ENCODE measurements at regions of chr5 and their contacts with region 1.

Region 1: GRCh38 chr5:170183816-170184687 is 48.7 kb upstream of the C5orf58 start:
- DNase-seq: peak; percentile 94
- ATAC-seq: peak; percentile 98
- H3K4me3 Mint-ChIP-seq: no peak overlapping the region
- H3K27ac Mint-ChIP-seq: no peak overlapping the region
- H3K4me1 Mint-ChIP-seq: peaks cover under 1% of the 10 kb centered on the region; the same call in 1 of the 2 replicates
- H3K27me3 Mint-ChIP-seq: no peaks in the 10 kb centered on the region
- CTCF ChIP-seq: peak; percentile 67

Region 2: GRCh38 chr5:170100066-170100943 is 83.7 kb before region 1 on chr5:
- CTCF ChIA-PET with region 1: interaction called, 38 read pairs
- POLR2A ChIA-PET with region 1: no interaction called
- DNase-seq: peak; percentile 90
- ATAC-seq: peak; percentile 89
- H3K4me3 Mint-ChIP-seq: no peak overlapping the region
- H3K27ac Mint-ChIP-seq: no peak overlapping the region
- H3K4me1 Mint-ChIP-seq: peaks cover 8% of the 10 kb centered on the region
- H3K27me3 Mint-ChIP-seq: peaks cover 5% of the 10 kb centered on the region; the same call in 1 of the 2 replicates
- CTCF ChIP-seq: peak; percentile 68

Region 3: GRCh38 chr5:170112876-170113521 is 71.1 kb before region 1 on chr5:
- CTCF ChIA-PET with region 1: interaction called, 12 read pairs
- POLR2A ChIA-PET with region 1: interaction called, 3 read pairs
- DNase-seq: peak; percentile 16
- ATAC-seq: peak; percentile 88
- H3K4me3 Mint-ChIP-seq: no peak overlapping the region
- H3K27ac Mint-ChIP-seq: no peak overlapping the region
- H3K4me1 Mint-ChIP-seq: peaks cover 39% of the 10 kb centered on the region
- H3K27me3 Mint-ChIP-seq: peaks cover 42% of the 10 kb centered on the region
- CTCF ChIP-seq: no peak

Region 4: DNA sequence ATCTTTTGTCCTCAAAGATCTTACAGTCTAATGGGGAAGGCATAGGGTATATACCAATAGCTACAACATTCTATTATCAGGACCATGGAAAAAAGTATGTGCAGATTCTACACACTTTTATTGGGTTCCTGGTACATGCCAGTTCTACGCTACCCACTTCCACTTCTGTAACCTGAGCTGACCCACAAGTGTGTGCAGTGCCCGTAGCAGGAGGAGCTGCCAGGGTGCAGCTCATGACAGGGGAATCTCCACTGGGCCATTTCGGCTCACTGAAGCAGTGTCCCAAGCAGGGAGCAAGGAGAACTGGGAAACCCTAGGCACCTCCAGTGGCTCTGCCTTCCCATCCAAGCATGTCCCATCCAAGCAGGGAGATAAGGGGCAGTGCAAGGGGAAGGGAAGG is 18.0 kb before region 1 on chr5:
- CTCF ChIA-PET with region 1: interaction called, 14 read pairs
- POLR2A ChIA-PET with region 1: no interaction called
- DNase-seq: no peak
- ATAC-seq: no peak
- H3K4me3 Mint-ChIP-seq: no peak overlapping the region
- H3K27ac Mint-ChIP-seq: no peak overlapping the region
- H3K4me1 Mint-ChIP-seq: peaks cover 4% of the 10 kb centered on the region
- H3K27me3 Mint-ChIP-seq: no peaks in the 10 kb centered on the region
- CTCF ChIP-seq: no peak

Region 5: DNA sequence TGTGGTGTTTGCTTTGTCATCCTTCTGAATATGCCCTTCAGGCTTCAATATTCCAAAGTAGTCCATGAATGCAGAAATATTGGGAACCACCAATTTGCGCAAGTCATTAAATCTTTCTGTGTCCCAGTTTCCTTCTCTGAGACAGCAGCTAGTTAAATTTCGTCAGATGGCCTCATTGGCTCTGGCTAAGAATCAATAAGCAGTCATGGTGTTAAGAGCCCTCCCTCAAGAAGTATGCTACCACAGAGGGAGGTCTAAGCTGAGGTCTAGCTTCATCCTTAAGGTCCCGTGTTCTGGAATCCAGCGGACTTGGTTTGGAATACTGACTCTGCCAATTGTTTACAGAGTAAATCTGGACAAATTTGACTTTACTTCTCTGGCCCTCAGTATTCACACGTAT is 10.4 kb before region 1 on chr5:
- CTCF ChIA-PET with region 1: interaction called, 16 read pairs
- POLR2A ChIA-PET with region 1: no interaction called
- DNase-seq: no peak
- ATAC-seq: no peak
- H3K4me3 Mint-ChIP-seq: no peak overlapping the region
- H3K27ac Mint-ChIP-seq: no peak overlapping the region
- H3K4me1 Mint-ChIP-seq: no peaks in the 10 kb centered on the region
- H3K27me3 Mint-ChIP-seq: no peaks in the 10 kb centered on the region
- CTCF ChIP-seq: no peak

Region 6: DNA sequence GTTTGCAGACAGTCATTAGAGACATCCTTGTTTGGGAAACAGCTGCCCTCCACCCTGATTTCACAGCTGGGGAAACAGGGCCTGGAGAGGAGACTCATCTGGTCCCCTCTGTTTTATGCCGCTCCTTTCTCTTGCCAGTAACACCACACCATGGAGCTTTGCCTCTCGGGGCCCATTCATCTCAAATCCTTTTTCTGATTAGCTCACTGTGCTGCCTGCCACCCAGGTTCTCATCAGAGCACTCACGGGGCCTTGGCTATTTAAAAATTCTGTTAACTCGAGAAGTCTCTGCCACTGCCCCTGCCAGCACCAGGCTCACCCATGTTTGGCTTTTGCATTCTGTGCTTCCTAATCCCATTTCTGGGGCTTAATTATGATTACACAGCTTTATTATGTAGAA is 11.9 kb after region 1 on chr5:
- CTCF ChIA-PET with region 1: interaction called, 31 read pairs
- POLR2A ChIA-PET with region 1: no interaction called
- DNase-seq: no peak
- ATAC-seq: no peak
- H3K4me3 Mint-ChIP-seq: no peak overlapping the region
- H3K27ac Mint-ChIP-seq: no peak overlapping the region
- H3K4me1 Mint-ChIP-seq: peaks cover 11% of the 10 kb centered on the region
- H3K27me3 Mint-ChIP-seq: no peaks in the 10 kb centered on the region
- CTCF ChIP-seq: no peak

Region 7: GRCh38 chr5:170216266-170216864 is 32.3 kb after region 1 on chr5:
- CTCF ChIA-PET with region 1: interaction called, 31 read pairs
- POLR2A ChIA-PET with region 1: no interaction called
- DNase-seq: peak; percentile 31
- ATAC-seq: peak; percentile 87
- H3K4me3 Mint-ChIP-seq: no peak overlapping the region
- H3K27ac Mint-ChIP-seq: no peak overlapping the region
- H3K4me1 Mint-ChIP-seq: peaks cover 22% of the 10 kb centered on the region
- H3K27me3 Mint-ChIP-seq: peaks cover 24% of the 10 kb centered on the region
- CTCF ChIP-seq: peak; percentile 29; the same call in 1 of the 2 replicates

Measured in WTC11 (cell line).